ENCODE measurements at regions of chr11 and their contacts with region 1.

Region 1: GRCh38 chr11:19326499-19326898 is 85.8 kb upstream of the E2F8 start:
- DNase-seq: no peak
- ATAC-seq: no peak
- H3K4me3 Mint-ChIP-seq: no peak overlapping the region
- H3K27ac Mint-ChIP-seq: no peak overlapping the region
- H3K4me1 Mint-ChIP-seq: no peaks in the 10 kb centered on the region
- H3K27me3 Mint-ChIP-seq: peaks cover 8% of the 10 kb centered on the region
- CTCF ChIP-seq: no peak

Region 2: DNA sequence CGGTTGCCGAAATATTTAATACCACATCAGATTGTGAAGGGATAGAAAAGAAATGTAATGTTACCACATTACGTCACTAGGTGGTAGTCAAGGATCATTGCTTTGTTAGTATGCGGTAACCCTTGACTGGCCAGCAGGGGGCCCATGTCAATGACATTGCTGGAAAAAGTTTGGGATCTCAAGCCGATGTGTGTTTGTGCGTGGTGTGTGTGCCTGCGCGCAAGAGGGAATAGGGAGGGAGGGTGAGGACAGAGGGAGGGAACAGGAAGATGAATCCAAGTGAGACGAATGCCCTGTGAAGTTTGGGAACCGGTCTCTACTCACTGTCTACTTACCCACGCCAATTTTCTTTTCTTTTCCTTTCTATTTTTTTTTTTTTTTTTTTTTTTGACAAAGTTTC is 255.2 kb before region 1 on chr11:
- CTCF ChIA-PET with region 1: no interaction called
- POLR2A ChIA-PET with region 1: no interaction called
- intact Hi-C with region 1: loop called (anchors 10 kb)
- DNase-seq: no peak
- ATAC-seq: peak; percentile 70
- H3K4me3 Mint-ChIP-seq: no peak overlapping the region
- H3K27ac Mint-ChIP-seq: no peak overlapping the region
- H3K4me1 Mint-ChIP-seq: peaks cover 2% of the 10 kb centered on the region
- H3K27me3 Mint-ChIP-seq: peaks cover 29% of the 10 kb centered on the region
- CTCF ChIP-seq: no peak

Region 3: GRCh38 chr11:19370100-19370861 is 43.8 kb after region 1 on chr11:
- CTCF ChIA-PET with region 1: no interaction called
- POLR2A ChIA-PET with region 1: no interaction called
- intact Hi-C with region 1: no loop called
- DNase-seq: no peak
- ATAC-seq: no peak
- H3K4me3 Mint-ChIP-seq: no peak overlapping the region
- H3K27ac Mint-ChIP-seq: no peak overlapping the region
- H3K4me1 Mint-ChIP-seq: no peaks in the 10 kb centered on the region
- H3K27me3 Mint-ChIP-seq: peaks cover 9% of the 10 kb centered on the region
- CTCF ChIP-seq: no peak

Measured in activated B cell treated with CpG ODN at 0.5 μM for 24 hours (primary cell).